GM12878 (cell line): ENCODE measurements at regions of chr12 and their contacts with region 1.

Region 1: GRCh38 chr12:34595749-34596733 is 573.7 kb downstream of the ALG10 start:
- DNase-seq: no peak
- ATAC-seq: no peak
- H3K4me3 ChIP-seq: no peak overlapping the region
- H3K27ac ChIP-seq: no peak overlapping the region
- H3K4me1 ChIP-seq: no peaks in the 10 kb centered on the region
- H3K27me3 ChIP-seq: no peaks in the 10 kb centered on the region
- CTCF ChIP-seq: no peak
- EP300 ChIP-seq: no peak
- POLR2A ChIP-seq: no peak
- RAD21 ChIP-seq: no peak

Region 2: GRCh38 chr12:34547276-34547675 is 48.8 kb before region 1 on chr12:
- CTCF ChIA-PET with region 1: no interaction called
- POLR2A ChIA-PET with region 1: no interaction called
- RAD21 ChIA-PET with region 1: no interaction called
- SMC1A ChIA-PET with region 1: no interaction called
- in situ Hi-C with region 1: loop called (anchors 10 kb)
- intact Hi-C with region 1: no loop called
- DNase-seq: no peak
- ATAC-seq: no peak
- H3K4me3 ChIP-seq: no peak overlapping the region
- H3K27ac ChIP-seq: no peak overlapping the region
- H3K4me1 ChIP-seq: no peaks in the 10 kb centered on the region
- H3K27me3 ChIP-seq: no peaks in the 10 kb centered on the region
- CTCF ChIP-seq: no peak
- EP300 ChIP-seq: no peak
- POLR2A ChIP-seq: no peak
- RAD21 ChIP-seq: no peak